ENCODE measurements at regions of chr3 and their contacts with region 1.

Region 1: GRCh38 chr3:9736831-9737230 is 5.3 kb downstream of the BRPF1 start:
- DNase-seq: peak in 4 of 10 donors; percentile 34 to 63 (median 51)
- H3K4me3 ChIP-seq: no peak overlapping the region
- H3K27ac ChIP-seq: peak overlapping the region in 1 of 59 donors; percentile 20
- H3K27me3 ChIP-seq: no peaks in the 10 kb centered on the region
- CTCF ChIP-seq: no peak

Region 2: GRCh38 chr3:9508781-9509180 is 228.1 kb before region 1 on chr3:
- intact Hi-C with region 1: loop called (anchors 5 to 10 kb)
- DNase-seq: peak in 3 of 10 donors; percentile 35 to 47 (median 43)
- H3K4me3 ChIP-seq: peak overlapping the region in 1 of 59 donors; percentile 20
- H3K27ac ChIP-seq: peak overlapping the region in 4 of 59 donors; percentile 2 to 44 (median 5)
- H3K27me3 ChIP-seq: peaks cover 0 to 18% (median 0%) of the 10 kb centered on the region in 45 donors
- CTCF ChIP-seq: no peak

Region 3: GRCh38 chr3:9803494-9803893 is 66.7 kb after region 1 on chr3:
- intact Hi-C with region 1: loop called in 1 of 2 experiments (anchors 2 kb)
- DNase-seq: peak in 7 of 10 donors; percentile 36 to 86 (median 69)
- H3K4me3 ChIP-seq: peak overlapping the region in 1 of 59 donors; percentile 3
- H3K27ac ChIP-seq: peak overlapping the region in 42 of 59 donors; percentile 2 to 83 (median 46)
- H3K27me3 ChIP-seq: no peaks in the 10 kb centered on the region
- CTCF ChIP-seq: no peak

Region 4: DNA sequence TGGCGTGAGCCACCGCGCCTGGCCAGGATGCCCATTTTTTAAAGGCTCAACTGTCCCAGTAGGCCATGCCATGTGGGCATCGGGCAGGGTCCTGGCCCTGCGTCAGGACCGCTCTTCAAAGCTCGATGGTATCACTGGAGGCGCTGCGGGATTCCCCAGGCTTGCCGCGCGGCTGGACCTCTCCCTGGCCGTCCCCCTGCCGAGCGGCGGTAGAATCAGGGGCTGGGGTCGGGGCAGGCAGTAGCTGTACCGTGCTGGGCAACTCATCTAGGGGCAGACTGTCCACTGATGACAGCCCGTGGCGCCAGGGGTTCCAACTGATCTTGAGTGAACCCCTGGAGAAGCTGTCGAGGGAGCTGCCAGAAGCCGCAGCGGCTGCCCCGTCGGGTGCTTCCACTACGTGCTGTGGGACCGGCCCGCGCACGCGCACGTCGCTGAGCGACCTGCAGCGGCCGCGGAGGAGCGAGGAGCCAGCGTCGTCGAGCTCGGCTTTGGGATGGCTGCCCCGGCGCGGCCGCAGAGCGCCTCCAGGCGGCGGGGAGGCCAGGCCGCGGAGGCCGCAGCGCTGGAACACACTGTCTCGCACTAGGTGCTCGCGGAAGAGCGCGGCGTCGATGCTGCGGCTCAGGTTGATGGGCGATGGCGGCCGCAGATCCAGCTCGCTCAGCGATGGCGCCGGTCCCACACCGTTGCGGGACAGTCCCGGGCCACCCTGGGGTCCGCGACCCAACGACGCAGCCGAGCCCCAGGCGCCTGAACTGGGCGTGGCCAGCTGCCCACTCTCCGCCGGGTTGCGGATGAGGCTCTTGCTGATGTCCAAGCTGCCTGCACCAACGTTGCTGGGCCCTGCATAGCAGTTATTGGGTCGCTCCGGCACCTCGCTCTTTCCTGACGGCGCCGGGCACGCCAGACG is 209.5 kb after region 1 on chr3:
- intact Hi-C with region 1: no loop called
- DNase-seq: peak; percentile 70 to 88 (median 76)
- H3K4me3 ChIP-seq: peak overlapping the region; percentile 42 to 81 (median 64)
- H3K27ac ChIP-seq: peak overlapping the region; percentile 46 to 95 (median 87)
- H3K27me3 ChIP-seq: no peaks in the 10 kb centered on the region
- CTCF ChIP-seq: peak; percentile 19 to 86 (median 74)

Region 5: GRCh38 chr3:9986237-9986725 is 249.4 kb after region 1 on chr3:
- intact Hi-C with region 1: no loop called
- DNase-seq: no peak
- H3K4me3 ChIP-seq: peak overlapping the region; percentile 67 to 100 (median 93)
- H3K27ac ChIP-seq: peak overlapping the region in 49 of 59 donors; percentile 1 to 91 (median 68)
- H3K27me3 ChIP-seq: no peaks in the 10 kb centered on the region
- CTCF ChIP-seq: no peak